Posterior cingulate gyrus (tissue), 11 donors: ENCODE measurements at regions of chr15 and their contacts with region 1.

Region 1: DNA sequence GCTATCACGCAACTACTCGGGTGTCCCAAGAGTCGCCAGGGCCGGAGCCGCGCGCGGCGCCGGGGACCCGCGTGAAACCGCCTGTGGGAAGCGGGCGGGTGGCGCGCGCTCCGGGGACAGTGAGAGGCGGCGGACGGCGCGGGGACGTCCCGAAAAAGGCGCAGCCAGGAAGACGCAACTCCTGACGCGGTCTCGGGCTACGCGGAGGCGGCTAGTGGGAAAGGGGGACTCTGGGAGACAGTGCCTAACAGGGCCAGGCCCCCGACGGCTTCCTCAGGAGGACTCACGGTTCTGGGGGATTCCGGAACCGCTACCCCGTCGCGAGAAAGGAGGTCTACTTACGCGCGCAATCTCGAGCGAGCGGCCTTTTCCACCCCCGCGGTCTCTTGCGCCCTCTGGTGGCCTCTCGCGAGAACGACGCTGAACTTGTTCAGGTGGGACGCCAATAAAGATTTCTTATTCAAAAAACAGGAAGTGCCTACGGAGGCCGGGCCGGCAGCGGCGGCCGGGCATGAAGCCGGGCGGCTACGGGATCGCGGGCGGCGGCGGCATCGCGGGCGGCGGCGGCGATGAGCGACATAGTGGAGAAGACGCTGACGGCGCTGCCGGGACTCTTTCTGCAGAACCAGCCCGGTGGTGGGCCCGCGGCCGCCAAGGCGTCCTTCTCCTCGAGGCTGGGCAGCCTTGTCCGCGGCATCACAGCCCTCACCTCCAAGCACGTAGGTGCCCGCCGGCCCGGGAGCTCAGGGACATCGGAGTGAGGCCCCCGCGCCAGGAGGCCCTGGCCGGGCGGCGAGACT is at the start of gene AP4E1:
- DNase-seq: peak; percentile 84 to 98 (median 91)

Region 2: DNA sequence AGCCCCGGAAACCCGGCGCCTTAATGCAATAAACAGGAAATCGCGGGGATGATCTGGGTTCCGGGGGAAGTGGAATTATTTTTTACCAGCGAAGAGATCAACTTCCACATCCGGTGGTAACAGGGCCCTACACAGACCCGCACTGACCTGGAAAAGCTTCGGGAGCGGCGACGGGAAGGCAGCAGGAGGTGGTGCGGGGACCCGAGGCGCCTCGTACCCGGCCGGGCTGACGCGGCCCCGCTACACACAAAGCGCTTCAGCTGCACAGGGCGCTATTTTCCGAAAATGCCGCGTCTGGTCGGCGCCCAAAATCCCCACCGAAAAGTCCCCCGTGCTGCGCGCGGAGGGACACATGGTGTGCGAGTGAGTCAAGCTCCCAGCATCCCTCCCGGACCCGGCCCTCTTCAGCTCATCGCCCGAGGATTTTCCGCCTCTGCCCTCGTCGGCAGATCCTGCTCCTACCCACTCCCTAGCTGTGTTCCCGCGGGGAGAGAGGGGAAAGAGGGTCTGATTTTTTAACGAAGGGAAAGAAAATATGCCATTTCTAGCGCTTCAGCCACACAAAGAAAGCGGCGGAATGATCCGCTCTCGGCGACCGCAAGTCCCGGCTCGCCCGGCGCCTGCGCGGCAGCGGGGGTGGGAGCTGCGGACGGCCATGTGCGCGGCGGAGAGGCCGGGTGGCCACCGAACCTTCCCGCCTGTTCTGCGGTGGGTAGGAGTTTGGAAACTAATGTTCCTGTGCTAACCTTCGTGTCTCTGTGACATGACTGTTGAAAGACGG is 553.4 kb before region 1 on chr15 and contains the start of gene GABPB1:
- intact Hi-C with region 1: loop called (anchors 5 kb)
- DNase-seq: peak; percentile 80 to 98 (median 85)

Region 3: GRCh38 chr15:50424066-50424890 is 484.1 kb before region 1 on chr15 and contains the start of gene USP8:
- intact Hi-C with region 1: loop called (anchors 1 kb)
- DNase-seq: peak; percentile 89 to 99 (median 94)

Region 4: GRCh38 chr15:50675536-50676144 is 232.8 kb before region 1 on chr15:
- intact Hi-C with region 1: loop called (anchors 1 kb)
- DNase-seq: no peak

Region 5: DNA sequence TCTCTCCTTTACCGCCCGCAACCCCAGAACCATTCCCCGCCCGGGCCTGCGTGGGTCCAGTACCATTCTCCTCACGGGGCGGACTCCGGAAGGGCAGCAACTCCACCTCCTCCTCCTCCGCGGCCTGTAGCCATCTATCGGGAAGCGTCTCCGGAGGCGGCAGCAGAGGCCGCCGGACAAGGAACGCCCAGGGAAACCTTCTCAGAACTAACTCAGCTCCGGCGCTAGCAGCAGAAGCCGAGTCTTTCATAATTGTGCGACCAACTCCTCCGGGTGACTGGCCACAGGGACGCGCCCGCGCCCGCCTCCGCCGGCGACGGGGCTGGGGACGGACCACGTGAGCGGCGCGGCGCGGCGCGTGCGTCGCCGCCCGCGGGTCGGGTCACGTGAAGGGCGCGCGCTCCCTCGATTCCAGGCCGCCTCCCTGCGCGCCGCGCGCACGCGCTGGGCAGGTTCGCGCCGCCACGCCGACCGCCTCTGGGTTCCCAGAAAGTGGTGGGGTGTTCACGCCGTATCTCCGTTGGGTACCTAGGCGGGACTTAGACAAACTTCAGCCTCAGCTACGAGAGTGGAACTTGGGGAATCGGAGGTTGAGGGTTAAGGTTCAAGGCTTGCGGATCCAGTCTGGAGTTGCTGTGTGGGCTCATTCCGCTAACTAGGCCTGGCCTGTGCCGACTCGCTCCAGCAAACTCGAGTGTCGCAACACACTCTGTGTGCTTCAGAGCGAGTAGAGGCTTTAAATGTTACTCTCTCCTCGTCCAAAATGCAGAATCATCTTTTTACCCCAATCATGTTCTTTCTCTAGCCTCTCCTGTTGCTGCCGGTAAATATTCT is 221.7 kb before region 1 on chr15 and contains the start of gene TRPM7:
- intact Hi-C with region 1: loop called (anchors 2 kb)
- DNase-seq: peak; percentile 75 to 98 (median 82)

Region 6: GRCh38 chr15:50765195-50765973 is 143.0 kb before region 1 on chr15 and contains the start of gene SPPL2A:
- intact Hi-C with region 1: loop called (anchors 2 kb)
- DNase-seq: peak; percentile 69 to 97 (median 75)

Region 7: DNA sequence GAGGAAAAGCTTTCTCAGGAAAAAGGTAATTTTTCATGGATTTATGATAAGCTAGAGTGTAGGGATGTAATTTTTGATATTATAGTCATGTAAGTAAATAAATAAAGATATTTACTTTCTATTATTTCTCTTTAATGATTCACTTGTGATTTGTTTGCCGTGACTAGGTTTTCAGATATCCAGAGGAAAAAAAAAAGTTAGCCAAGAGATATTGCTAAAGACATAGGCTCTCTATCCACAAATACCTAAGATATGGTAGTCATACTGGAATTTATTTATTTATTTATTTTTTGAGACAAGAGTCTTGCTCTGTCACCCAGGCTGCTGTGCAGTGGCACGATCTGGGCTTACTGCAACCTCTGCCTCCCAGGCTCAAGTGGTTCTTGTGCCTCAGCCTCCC is 59.9 kb after region 1 on chr15:
- intact Hi-C with region 1: no loop called
- DNase-seq: no peak

Region 8: GRCh38 chr15:51192521-51193280 is 284.3 kb after region 1 on chr15:
- intact Hi-C with region 1: loop called (anchors 10 kb)
- DNase-seq: peak; percentile 82 to 99 (median 96)